GM12878 (cell line): ENCODE measurements at regions of chr10 and their contacts with region 1.

Region 1: DNA sequence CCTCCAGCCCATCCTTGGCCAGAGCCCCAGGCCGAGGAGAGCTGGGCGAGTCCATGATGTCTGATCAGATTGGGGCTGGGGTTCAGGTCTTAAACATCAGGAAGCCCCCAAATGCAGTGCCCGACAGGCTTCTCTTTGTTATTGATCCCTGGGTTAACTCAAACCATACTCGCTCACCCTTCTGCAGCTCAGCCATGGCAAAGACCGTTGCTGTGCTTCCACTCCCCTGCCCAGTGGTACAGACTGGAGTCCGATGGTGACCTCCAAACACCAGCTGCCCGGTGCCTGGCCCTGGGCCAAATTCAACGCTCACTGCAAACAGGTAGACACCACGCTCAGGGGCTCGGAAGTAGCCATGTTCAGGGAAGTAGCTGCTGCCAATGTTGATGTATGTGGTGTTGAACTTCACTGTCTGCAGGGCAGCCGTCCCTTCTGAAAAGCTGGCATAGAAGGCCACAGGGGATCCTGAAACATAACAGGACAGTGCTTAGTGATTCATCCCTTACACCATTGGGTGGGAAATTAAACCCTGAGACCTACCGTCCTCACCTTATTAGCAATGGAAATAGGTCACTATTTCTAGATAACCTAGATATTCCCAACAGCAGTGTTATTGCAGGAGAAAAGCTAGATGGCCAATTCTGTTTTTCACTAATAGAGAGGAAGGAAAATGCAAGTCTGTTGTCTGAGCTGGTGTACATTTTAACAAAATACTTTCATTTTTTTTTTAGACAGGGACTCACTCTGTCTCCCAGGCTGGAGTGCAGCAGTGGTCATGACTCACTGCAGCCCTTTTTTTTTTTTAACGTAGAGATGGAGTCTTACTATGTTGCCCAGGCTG is 20.5 kb downstream of the MMRN2 start:
- DNase-seq: no peak
- ATAC-seq: no peak
- H3K4me3 ChIP-seq: no peak overlapping the region
- H3K27ac ChIP-seq: no peak overlapping the region
- H3K4me1 ChIP-seq: no peaks in the 10 kb centered on the region; the same call in 1 of the 2 replicates
- H3K27me3 ChIP-seq: no peaks in the 10 kb centered on the region
- CTCF ChIP-seq: no peak
- EP300 ChIP-seq: no peak
- POLR2A ChIP-seq: no peak
- RAD21 ChIP-seq: no peak

Region 2: GRCh38 chr10:86888585-86889381 is 48.1 kb before region 1 on chr10:
- CTCF ChIA-PET with region 1: no interaction called
- POLR2A ChIA-PET with region 1: no interaction called
- RAD21 ChIA-PET with region 1: no interaction called
- SMC1A ChIA-PET with region 1: no interaction called
- in situ Hi-C with region 1: no loop called
- intact Hi-C with region 1: no loop called
- DNase-seq: peak; percentile 88
- ATAC-seq: peak; percentile 99
- H3K4me3 ChIP-seq: no peak overlapping the region
- H3K27ac ChIP-seq: peak overlapping the region; percentile 45
- H3K4me1 ChIP-seq: peaks cover 6% of the 10 kb centered on the region; the same call in 1 of the 2 replicates
- H3K27me3 ChIP-seq: no peaks in the 10 kb centered on the region
- CTCF ChIP-seq: no peak
- EP300 ChIP-seq: peak; percentile 32 to 81; a peak in 3 of 4 replicates
- POLR2A ChIP-seq: no peak
- RAD21 ChIP-seq: 0 out of 2 replicates have a peak, but pooled peaks have one; percentile 1

Region 3: GRCh38 chr10:86960003-86960862 is 23.4 kb after region 1 on chr10:
- CTCF ChIA-PET with region 1: interaction called, 25 read pairs
- POLR2A ChIA-PET with region 1: interaction called, 5 read pairs
- RAD21 ChIA-PET with region 1: interaction called, 12 read pairs
- SMC1A ChIA-PET with region 1: interaction called, 3 read pairs
- in situ Hi-C with region 1: no loop called
- intact Hi-C with region 1: no loop called
- DNase-seq: peak; percentile 35
- ATAC-seq: peak; percentile 91
- H3K4me3 ChIP-seq: no peak overlapping the region
- H3K27ac ChIP-seq: no peak overlapping the region
- H3K4me1 ChIP-seq: peaks cover 25% of the 10 kb centered on the region
- H3K27me3 ChIP-seq: no peaks in the 10 kb centered on the region
- CTCF ChIP-seq: peak; percentile 95 to 99 (median 97)
- EP300 ChIP-seq: no peak
- POLR2A ChIP-seq: no peak
- RAD21 ChIP-seq: peak; percentile 72

Region 4: DNA sequence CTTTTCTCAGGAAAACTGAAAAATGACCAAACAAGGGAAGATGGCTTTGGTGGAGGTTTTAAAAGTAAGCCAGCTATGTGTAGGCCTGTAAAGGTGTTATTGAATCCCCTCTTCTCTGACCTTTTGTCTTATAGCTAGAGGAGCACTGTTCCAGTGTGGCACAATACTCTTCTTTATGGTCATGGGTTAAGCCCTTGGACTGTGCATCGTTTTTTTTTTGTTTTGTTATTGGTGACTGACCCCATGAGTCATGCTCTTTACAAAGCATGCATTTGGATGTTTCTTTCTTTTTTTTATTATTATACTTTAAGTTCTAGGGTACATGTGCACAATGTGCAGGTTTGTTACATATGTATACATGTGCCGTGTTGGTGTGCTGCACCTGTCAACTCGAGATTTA is 63.6 kb after region 1 on chr10:
- CTCF ChIA-PET with region 1: no interaction called
- POLR2A ChIA-PET with region 1: no interaction called
- RAD21 ChIA-PET with region 1: no interaction called
- SMC1A ChIA-PET with region 1: no interaction called
- in situ Hi-C with region 1: no loop called
- intact Hi-C with region 1: no loop called
- DNase-seq: no peak
- ATAC-seq: no peak
- H3K4me3 ChIP-seq: no peak overlapping the region
- H3K27ac ChIP-seq: no peak overlapping the region
- H3K4me1 ChIP-seq: no peaks in the 10 kb centered on the region
- H3K27me3 ChIP-seq: no peaks in the 10 kb centered on the region
- CTCF ChIP-seq: no peak
- EP300 ChIP-seq: no peak
- POLR2A ChIP-seq: no peak
- RAD21 ChIP-seq: no peak